PC-9 (cell line): ENCODE measurements at regions of chr15 and their contacts with region 1.

Region 1: GRCh38 chr15:83436458-83437158 is 10.5 kb upstream of the SH3GL3 start:
- DNase-seq: no peak
- H3K4me3 ChIP-seq: no peak overlapping the region
- H3K27ac ChIP-seq: no peak overlapping the region
- H3K4me1 ChIP-seq: no peaks in the 10 kb centered on the region
- H3K27me3 ChIP-seq: no peaks in the 10 kb centered on the region
- CTCF ChIP-seq: peak; percentile 59

Region 2: DNA sequence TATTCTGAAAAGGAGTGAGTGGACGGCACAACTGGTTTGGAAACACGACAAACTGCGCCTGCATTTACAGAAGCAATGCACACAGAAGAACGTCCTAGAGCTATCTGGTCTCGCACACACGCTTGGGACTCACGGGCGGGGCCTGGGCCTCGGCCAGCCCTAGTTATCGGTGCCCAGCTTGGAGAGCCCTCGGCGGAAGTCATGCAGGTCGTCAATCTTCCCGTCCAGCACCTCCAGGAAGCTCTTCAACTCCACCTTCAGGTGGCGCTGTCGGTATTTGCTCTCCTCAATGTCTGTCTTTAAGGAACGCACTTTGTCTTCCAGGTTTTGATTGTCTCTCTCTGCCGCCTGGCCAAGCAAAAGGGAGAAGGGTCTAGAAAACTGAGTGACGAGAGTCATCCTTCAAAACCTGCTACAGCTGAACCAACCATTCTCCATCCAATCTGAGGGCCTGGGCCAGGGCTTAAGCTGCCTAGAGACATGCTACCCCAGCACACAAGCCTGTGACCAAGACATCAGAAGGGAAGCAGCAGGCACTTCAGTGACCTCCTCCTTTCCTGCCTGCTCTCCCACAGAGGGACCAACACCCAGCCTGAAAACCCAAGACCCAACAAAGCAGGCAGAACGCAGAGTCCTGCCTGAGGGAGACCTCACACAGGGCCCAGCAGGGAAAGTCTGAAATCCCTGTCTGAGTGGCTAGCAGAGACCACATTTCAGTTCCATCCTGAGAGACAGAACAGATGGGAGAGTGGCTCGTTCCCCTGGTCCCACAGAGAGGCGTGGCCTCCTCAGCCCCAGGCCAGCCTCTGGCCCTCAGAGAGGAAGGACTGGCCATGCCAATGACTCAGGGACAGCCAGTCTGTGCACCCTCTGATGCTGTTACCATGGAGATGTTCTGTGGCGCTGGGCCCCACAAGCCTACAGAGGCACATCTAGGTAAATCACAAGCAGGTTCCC is 586.8 kb before region 1 on chr15:
- CTCF ChIA-PET with region 1: no interaction called
- POLR2A ChIA-PET with region 1: interaction called, 26 read pairs
- intact Hi-C with region 1: no loop called
- DNase-seq: peak; percentile 44 to 46
- H3K4me3 ChIP-seq: no peak overlapping the region
- H3K27ac ChIP-seq: no peak overlapping the region
- H3K4me1 ChIP-seq: no peaks in the 10 kb centered on the region
- H3K27me3 ChIP-seq: no peaks in the 10 kb centered on the region
- CTCF ChIP-seq: peak; percentile 65

Region 3: GRCh38 chr15:83164111-83164770 is 272.4 kb before region 1 on chr15:
- CTCF ChIA-PET with region 1: interaction called, 12 read pairs
- POLR2A ChIA-PET with region 1: no interaction called
- intact Hi-C with region 1: no loop called
- DNase-seq: no peak
- H3K4me3 ChIP-seq: no peak overlapping the region
- H3K27ac ChIP-seq: no peak overlapping the region
- H3K4me1 ChIP-seq: 0 out of 2 replicates have a peak, but pooled peaks cover 5% of the 10 kb centered on the region
- H3K27me3 ChIP-seq: no peaks in the 10 kb centered on the region
- CTCF ChIP-seq: no peak

Region 4: GRCh38 chr15:83380682-83381081 is 55.9 kb before region 1 on chr15:
- CTCF ChIA-PET with region 1: interaction called, 12 read pairs
- POLR2A ChIA-PET with region 1: no interaction called
- intact Hi-C with region 1: loop called (anchors 2 kb)
- DNase-seq: peak; percentile 82 to 88
- H3K4me3 ChIP-seq: no peak overlapping the region
- H3K27ac ChIP-seq: peak overlapping the region; percentile 95
- H3K4me1 ChIP-seq: peaks cover 53% of the 10 kb centered on the region
- H3K27me3 ChIP-seq: no peaks in the 10 kb centered on the region
- CTCF ChIP-seq: peak; percentile 73

Region 5: GRCh38 chr15:83747050-83747717 is 310.6 kb after region 1 on chr15:
- CTCF ChIA-PET with region 1: no interaction called
- POLR2A ChIA-PET with region 1: no interaction called
- intact Hi-C with region 1: loop called (anchors 2 kb)
- DNase-seq: peak in 1 of 2 experiments; percentile 27
- H3K4me3 ChIP-seq: no peak overlapping the region
- H3K27ac ChIP-seq: no peak overlapping the region
- H3K4me1 ChIP-seq: peaks cover 5% of the 10 kb centered on the region; the same call in 1 of the 2 replicates
- H3K27me3 ChIP-seq: no peaks in the 10 kb centered on the region
- CTCF ChIP-seq: peak; percentile 51